ENCODE measurements at regions of chr15 and their contacts with region 1.

Region 1: DNA sequence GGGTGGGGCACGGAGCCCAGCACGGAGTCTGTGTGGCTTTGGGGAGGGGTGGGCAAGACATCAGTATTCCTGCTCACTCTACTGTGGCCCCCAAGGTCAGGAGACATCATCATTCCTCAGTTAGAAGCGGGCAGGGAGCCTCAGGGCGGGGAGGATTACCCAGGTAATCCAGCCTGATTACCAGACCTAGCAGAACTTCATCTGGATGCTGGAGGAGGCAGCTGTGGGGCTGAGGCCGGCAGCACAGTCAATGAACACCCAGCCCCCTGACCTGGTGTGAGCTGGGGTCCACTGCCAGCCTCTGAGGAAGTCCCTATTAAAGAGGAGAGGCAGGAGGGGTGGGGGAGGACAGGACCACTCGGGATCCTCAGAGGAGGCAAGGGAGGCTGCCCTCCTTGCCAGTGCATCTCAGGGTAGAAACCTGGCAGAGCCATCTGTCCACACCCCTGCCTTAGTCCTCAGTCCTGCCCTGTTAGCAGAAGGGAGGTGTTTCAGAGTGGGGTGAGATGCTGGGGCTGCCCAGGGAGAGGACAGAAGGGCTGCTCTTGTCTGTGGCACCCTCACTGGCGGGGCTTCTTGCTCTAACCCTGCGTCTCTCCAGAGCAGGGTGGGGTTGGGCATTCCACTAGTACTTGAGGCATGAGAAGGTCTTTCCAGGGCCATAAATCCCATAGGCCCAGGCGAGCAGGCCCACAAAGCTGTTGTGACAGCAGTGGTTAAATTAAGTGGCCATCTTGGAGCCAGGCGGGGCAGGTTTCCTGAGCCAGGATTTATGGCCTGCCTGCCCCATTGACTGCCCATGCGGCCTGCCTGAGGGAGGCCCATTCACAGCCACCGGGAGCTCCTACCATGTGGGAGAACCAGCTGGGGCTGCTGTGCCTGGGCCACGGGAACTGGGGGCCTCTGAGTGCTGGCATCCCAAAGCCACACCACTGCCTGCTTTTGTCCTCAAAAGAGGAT is 82.1 kb downstream of the LINGO1 start:
- DNase-seq: no peak

Region 2: GRCh38 chr15:77589839-77590238 is 39.3 kb after region 1 on chr15:
- in situ Hi-C with region 1: loop called (anchors 5 kb)
- DNase-seq: no peak

Region 3: DNA sequence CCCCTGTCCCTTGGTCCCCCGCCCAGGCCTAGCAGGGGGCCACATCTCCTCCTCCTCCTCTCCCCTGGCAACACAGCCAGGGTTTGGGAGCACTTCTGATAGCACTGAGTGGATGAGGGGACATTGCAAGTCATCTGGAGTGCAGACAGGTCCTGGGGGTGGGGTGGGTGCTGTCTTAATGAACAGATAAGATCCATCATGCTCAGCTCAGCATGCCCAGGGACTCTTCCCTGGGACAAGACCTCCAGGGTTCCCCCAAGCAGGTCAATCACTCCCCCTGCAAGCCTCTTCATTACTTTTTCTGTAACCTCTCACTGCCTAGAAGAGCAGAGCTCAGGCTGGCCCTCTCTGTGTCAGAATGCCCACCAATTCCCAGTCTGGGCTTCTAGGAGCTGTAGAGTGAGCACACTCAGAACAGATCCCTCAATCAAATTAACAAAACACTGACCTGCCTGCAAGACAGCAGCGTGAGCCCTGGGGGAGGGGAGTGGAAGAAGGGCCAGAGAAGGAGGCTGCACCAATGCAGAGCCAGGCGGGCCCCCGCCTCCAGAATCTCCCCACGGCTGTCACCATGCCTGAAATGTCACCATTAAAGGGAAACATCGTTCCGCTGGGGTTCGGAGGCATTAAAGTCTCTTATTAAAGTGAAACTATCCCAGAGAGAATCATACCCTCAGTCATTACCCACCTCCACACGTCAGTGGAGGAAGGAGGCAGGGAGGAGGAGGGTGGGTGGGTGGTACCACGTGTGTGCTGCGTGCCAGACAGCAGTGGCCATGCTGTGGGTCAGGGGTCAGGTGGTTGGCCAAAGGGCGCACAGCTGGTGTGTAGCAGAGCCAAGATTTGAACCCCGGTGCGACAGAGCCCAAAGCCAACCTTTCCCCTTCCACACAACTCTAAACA is 196.9 kb after region 1 on chr15:
- in situ Hi-C with region 1: no loop called
- DNase-seq: no peak